ENCODE measurements at regions of chr19 and their contacts with region 1.

Region 1: GRCh38 chr19:18408053-18408476 is 10.6 kb upstream of the LRRC25 start:
- DNase-seq: peak; percentile 72
- ATAC-seq: no peak

Region 2: GRCh38 chr19:17985037-17985818 is 422.8 kb before region 1 on chr19:
- intact Hi-C with region 1: no loop called
- DNase-seq: no peak
- ATAC-seq: no peak

Region 3: GRCh38 chr19:18333662-18334389 is 74.2 kb before region 1 on chr19:
- intact Hi-C with region 1: no loop called
- DNase-seq: no peak
- ATAC-seq: no peak

Region 4: DNA sequence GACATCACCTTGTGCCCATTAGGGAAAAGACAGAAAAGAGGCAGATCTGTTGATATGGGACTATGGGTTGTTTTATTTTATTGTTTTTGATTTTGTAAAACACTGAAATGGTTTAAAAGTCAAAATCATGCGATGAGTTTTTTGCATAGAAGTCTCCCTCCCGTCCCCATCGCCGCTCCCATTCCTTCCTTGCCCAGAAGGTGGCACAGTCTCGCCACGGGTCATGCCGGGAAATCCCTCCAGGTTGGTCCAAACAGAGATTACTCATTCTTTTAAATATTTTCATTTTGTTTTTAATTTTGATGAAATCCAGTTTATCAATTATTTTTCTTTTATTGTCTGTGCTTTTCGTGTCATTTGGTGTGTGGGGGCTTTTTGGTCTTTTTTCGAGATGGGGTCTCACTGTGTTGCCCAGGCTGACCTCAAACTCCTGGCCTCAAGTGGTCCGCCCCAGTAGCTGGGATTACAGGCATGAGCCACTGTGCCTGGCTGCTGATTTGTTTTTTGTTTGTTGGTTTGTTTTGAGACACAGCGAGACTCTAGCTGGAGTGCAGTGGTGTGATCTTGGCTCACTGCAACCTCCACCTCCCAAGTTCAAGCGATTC is 58.4 kb before region 1 on chr19:
- intact Hi-C with region 1: loop called (anchors 1 kb)
- DNase-seq: no peak
- ATAC-seq: no peak

Region 5: DNA sequence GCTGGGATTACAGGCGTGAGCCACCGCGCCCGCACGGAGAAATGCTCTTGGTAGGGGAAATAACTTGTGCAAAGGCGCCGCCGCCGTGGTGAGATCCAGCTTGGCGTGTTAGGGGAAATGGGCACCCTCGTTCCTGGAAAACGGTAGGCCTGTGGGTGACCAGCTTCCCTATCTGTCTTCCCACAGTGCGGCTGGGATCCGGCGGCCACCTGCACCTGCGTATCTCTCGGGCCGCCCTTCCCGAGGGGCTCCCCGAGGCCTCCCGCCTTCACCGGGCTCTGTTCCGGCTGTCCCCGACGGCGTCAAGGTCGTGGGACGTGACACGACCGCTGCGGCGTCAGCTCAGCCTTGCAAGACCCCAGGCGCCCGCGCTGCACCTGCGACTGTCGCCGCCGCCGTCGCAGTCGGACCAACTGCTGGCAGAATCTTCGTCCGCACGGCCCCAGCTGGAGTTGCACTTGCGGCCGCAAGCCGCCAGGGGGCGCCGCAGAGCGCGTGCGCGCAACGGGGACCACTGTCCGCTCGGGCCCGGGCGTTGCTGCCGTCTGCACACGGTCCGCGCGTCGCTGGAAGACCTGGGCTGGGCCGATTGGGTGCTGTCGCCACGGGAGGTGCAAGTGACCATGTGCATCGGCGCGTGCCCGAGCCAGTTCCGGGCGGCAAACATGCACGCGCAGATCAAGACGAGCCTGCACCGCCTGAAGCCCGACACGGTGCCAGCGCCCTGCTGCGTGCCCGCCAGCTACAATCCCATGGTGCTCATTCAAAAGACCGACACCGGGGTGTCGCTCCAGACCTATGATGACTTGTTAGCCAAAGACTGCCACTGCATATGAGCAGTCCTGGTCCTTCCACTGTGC is 19.7 kb before region 1 on chr19:
- intact Hi-C with region 1: loop called (anchors 2 kb)
- DNase-seq: peak; percentile 95
- ATAC-seq: peak; percentile 86

Region 6: GRCh38 chr19:18464646-18465045 is 56.6 kb after region 1 on chr19:
- intact Hi-C with region 1: no loop called
- DNase-seq: peak; percentile 86
- ATAC-seq: peak; percentile 72